ENCODE measurements at regions of chr4 and their contacts with region 1.

Region 1: GRCh38 chr4:6264225-6264540 is 5.5 kb upstream of the WFS1 start:
- DNase-seq: peak; percentile 36

Region 2: DNA sequence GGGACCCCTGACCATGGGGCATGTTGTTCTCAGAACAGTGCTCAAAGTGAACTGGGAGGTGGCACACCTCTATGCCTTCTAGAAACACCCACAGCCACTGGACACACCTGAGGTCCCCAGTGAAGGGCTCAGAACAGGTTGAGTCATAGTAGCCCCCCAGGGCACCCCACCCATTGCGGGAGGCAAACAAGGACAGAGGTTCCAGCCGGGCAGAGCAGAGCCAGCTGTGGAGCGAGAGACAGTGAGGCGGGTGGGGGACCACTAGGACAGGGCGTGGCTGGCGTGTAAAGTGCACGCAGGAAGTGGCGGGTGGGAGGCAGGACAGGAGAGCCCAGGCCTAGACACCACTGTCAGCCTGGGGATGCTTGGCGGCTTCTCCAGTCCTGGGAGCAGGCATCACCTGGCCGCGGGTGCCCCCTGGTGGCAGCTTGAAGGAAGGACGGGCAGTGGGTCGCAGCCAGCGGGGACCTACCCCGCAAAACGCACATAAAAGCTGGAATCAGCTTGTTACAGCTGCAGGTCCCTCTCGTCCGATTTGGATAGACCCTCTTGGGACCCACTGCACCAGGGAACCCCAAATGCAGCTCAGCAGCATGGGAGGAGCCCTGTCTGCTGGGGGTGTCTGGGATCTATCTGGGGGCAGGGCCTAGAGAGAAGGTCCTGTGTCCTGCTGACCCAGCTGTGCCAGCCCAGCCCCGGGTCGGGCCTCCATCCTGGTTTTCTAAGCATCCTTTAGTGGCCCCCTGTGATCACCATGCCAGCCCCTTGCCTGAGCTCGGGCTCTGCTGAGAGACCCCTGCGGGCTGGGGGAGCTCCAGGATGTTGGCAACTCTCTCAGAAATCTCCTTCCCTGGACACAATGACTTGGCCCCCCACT is 63.1 kb after region 1 on chr4:
- in situ Hi-C with region 1: loop called (anchors 5 kb)
- DNase-seq: peak; percentile 81

Measured in KBM-7 (cell line).